ENCODE measurements at regions of chr4 and their contacts with region 1.

Region 1: GRCh38 chr4:183645326-183645725 is 13.7 kb downstream of the RWDD4 start:
- DNase-seq: no peak
- ATAC-seq: no peak
- H3K4me3 ChIP-seq: no peak overlapping the region
- H3K4me1 ChIP-seq: no peaks in the 10 kb centered on the region
- CTCF ChIP-seq: no peak

Region 2: GRCh38 chr4:183691006-183691405 is 45.7 kb after region 1 on chr4:
- intact Hi-C with region 1: loop called in 1 of 2 experiments (anchors 10 kb)
- DNase-seq: no peak
- ATAC-seq: no peak
- H3K4me3 ChIP-seq: no peak overlapping the region
- H3K4me1 ChIP-seq: no peaks in the 10 kb centered on the region
- CTCF ChIP-seq: no peak

Region 3: DNA sequence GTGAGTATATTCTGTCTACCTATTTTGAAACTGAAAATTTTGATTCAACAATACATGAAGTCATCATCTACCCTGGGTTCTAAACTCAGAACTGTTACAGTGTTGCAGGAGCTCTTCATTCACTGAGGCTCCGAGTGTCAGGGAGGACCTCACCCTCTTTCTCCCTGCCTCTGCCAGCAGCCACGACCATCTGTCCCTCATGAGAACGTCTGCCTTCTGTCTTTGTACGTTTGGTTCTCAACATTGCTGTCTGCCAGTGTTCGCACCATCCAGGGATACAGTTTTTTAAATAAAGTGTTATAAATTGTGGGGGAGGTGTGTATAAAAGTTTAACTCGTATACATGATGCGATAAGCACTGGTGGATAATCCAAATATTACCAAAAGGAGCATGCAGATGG is 69.3 kb after region 1 on chr4:
- intact Hi-C with region 1: no loop called
- DNase-seq: no peak
- ATAC-seq: no peak
- H3K4me3 ChIP-seq: no peak overlapping the region
- H3K4me1 ChIP-seq: no peaks in the 10 kb centered on the region
- CTCF ChIP-seq: no peak